Heart right ventricle (tissue), 16 donors: ENCODE measurements at regions of chr17 and their contacts with region 1.

Region 1: DNA sequence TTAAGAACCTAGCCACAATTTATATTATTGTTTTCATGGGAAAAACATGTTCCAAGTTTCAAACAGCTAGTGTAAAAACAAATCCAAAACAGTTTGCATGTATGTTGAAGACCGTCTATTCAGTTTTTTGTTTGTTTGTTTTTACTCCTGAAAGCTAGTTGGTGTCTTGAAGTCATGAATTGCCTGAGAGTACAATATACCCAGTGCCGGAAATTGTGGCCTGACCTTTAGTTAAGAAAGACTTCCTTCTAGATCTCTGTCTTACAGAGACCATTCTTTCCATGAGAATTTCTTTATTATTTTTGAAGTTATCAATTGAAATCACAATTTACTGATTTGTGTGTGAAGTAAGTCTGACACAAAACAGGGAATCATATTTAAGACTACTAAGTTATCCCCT is 474.8 kb downstream of the KCNJ2 start:
- DNase-seq: no peak
- ATAC-seq: no peak
- H3K4me3 ChIP-seq: no peak overlapping the region
- H3K27ac ChIP-seq: no peak overlapping the region
- H3K4me1 ChIP-seq: no peaks in the 10 kb centered on the region
- H3K27me3 ChIP-seq: peaks cover 0 to 2% (median 0%) of the 10 kb centered on the region in 7 donors
- CTCF ChIP-seq: no peak

Region 2: DNA sequence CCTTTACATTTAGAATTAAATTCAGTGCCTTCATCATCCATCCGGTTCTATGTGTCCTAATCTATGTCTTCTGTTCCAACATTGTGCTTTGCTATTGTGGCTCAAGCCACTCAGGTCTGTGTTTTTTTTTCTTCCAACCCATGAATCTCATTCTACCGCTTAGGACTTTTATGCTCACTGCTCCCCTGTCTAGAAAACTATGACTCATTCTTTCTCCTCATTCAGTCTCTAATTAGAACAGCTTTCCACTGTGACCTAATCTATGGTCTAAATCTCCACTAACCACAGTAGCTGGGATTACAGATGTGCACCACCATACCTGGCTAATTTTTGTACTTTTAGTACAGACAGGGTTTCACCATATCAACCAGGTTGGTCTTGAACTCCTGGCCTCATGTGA is 56.1 kb before region 1 on chr17:
- intact Hi-C with region 1: loop called in 1 of 10 experiments (anchors 10 kb)
- DNase-seq: no peak
- ATAC-seq: no peak
- H3K4me3 ChIP-seq: no peak overlapping the region
- H3K27ac ChIP-seq: no peak overlapping the region
- H3K4me1 ChIP-seq: no peaks in the 10 kb centered on the region
- H3K27me3 ChIP-seq: no peaks in the 10 kb centered on the region
- CTCF ChIP-seq: no peak